IMR-90 (cell line): ENCODE measurements at regions of chr16 and their contacts with region 1.

Region 1: DNA sequence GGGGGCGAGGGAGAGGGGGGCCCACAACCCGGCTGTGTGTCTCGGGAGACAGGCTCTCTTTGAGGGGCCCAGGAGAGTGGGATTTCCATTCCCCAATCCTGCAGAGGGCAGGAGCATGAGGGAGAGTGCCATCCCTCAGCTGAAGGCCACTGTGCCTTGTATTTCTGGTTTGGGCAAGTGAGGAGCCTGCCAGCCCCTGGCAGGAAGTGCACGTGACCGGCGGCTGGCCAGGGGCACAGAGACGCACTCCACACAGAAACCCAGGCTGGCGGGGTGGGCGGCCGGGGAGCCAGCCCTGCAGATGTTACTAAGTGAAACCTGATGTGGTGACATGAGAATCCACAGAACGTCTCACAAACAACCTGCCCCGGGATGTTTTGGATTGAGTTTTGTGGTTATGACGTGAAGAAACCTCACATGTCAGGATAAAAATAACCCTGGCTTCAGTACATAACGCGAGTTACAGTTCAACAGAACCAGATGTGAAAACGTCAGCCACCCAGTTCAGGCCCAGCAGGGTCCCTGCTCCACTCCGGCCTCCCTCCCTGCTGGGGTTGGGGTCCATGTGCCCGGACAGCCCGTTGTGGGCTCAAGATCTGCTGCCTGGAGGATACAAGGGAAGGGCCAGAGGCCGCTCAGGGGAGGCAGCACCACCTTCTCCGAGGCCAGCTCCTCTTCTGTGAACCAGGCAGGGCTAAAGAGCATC is 51.7 kb upstream of the MTSS2 start:
- DNase-seq: peak; percentile 99
- ATAC-seq: peak; percentile 28
- H3K4me3 ChIP-seq: no peak overlapping the region
- H3K27ac ChIP-seq: peak overlapping the region; percentile 95
- H3K4me1 ChIP-seq: peaks cover 58% of the 10 kb centered on the region
- H3K27me3 ChIP-seq: no peaks in the 10 kb centered on the region
- CTCF ChIP-seq: no peak
- POLR2A ChIP-seq: peak; percentile 86
- RAD21 ChIP-seq: 0 out of 2 replicates have a peak, but pooled peaks have one; percentile 26

Region 2: DNA sequence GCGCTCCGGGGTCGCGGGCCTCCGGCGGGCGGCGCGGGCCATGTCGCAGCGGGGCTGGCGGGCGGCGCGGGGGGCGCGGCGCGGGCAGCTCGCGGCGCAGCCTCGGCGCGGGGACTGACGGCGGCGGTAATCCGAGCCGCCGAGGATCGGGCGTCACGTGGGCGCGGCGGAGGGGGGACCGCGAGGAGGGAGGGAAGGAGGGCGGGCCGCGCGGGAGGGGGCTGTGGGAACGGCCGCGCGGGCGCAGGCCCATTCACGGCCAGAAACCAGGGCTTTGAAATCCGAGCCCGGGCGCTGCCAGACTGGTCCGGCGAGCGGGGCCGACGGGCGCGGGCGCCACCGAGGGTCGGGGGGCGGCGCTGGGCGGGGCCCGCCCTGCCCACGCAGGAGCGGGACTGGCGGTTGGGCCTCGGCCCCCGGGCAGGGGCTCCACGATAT is 51.6 kb before region 1 on chr16 and contains the start of gene MTSS2:
- CTCF ChIA-PET with region 1: interaction called, 6 read pairs
- POLR2A ChIA-PET with region 1: interaction called, 7 read pairs
- dilution Hi-C with region 1: no loop called
- in situ Hi-C with region 1: loop called (anchors 5 kb)
- intact Hi-C with region 1: loop called (anchors 1 kb)
- DNase-seq: peak; percentile 85
- ATAC-seq: peak; percentile 70
- H3K4me3 ChIP-seq: peak within 1 kb of the TSS; percentile 90
- H3K27ac ChIP-seq: peak within 1 kb of the TSS; percentile 92
- H3K4me1 ChIP-seq: peaks cover 61% of the 10 kb centered on the region
- H3K27me3 ChIP-seq: no peaks in the 10 kb centered on the region
- CTCF ChIP-seq: 0 out of 2 replicates have a peak, but pooled peaks have one; percentile 2
- POLR2A ChIP-seq: no peak
- RAD21 ChIP-seq: no peak
- total RNA-seq, gene MTSS2: 8.9 and 9.1 TPM in 2 replicates

Region 3: DNA sequence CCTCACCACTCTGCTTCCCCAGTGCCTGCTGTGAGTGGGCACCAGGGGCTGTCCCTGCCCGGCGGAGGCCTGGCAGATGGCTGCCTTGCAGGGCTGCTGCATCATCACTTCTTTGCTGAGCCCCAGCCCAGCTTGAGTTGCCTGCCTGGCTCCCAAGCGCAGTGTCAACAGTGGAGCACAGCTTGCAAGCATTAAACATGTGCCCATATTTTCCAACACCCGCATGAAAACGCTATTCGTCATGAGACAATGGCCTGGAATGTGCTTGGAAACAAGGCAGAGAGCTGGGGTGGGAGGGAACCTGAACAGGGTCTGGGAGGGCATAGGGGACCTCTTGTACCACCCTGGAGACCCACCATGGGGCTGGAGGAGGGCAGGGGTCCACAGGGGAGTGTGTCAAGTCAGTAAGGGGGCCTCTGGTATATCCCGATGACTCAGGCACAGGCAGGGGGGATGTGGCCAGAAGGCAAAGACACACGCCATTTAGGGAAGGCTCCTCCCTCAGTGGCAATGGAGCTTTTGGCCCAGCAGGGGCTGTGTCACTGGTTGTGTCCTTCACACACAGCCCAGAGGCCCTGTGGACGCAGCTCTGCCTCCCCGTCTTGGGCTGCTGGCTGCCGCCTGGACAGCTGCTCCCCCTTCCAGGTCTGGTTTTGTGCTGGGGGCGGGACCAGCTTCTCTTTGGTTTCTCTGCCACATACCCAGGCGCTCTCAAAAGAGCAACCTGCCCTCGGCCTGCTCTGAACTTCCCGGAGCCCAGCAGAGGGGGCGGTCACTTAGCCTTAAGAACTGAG is 34.3 kb before region 1 on chr16:
- CTCF ChIA-PET with region 1: interaction called, 12 read pairs
- POLR2A ChIA-PET with region 1: interaction called, 3 read pairs
- dilution Hi-C with region 1: no loop called
- in situ Hi-C with region 1: no loop called
- intact Hi-C with region 1: loop called (anchors 1 kb)
- DNase-seq: peak; percentile 94
- ATAC-seq: peak; percentile 73
- H3K4me3 ChIP-seq: no peak overlapping the region
- H3K27ac ChIP-seq: peak overlapping the region; percentile 80
- H3K4me1 ChIP-seq: peaks cover 65% of the 10 kb centered on the region
- H3K27me3 ChIP-seq: no peaks in the 10 kb centered on the region
- CTCF ChIP-seq: peak; percentile 55
- POLR2A ChIP-seq: peak; percentile 50; the same call in 1 of the 2 replicates
- RAD21 ChIP-seq: peak; percentile 70

Region 4: DNA sequence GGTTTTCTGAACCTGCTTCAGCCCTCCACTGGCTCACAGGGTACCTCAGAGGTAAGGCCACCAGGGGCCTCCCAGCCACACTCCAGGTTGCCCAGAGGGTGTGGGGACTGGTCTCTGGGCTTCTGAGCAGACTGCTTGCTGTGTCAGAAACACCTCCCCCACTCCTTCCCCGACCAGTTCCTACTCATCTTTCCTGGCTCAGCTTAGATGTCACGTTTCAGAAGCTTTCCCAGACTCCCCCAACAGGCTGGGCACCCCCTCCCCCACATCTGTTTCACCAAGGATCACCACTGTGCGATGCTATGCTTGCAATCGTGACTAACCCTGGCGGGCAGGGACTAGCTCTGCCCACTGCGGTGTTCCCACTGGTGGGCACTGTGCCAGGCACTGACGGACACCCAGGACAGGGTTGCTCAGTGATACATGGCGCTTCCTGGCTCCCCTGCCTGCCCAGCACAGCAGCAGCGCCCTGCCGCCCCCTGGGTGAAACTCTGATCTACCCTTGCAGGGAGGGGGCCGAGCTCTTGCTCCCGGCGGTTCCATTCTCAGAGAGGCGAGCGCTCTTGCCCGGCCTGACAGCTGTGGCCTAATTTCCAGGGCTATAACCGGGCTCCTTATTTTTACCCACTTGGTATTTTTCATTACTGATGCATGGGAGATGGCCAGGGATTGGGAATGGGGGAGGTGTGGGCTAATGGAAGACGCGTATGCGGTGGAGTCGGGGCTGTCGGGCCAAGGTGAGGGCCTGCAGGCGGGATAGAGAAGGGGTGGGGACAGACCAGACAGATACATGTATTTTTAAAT is 22.3 kb before region 1 on chr16:
- CTCF ChIA-PET with region 1: interaction called, 5 read pairs
- POLR2A ChIA-PET with region 1: interaction called, 6 read pairs
- dilution Hi-C with region 1: no loop called
- in situ Hi-C with region 1: no loop called
- intact Hi-C with region 1: loop called (anchors 1 kb)
- DNase-seq: peak; percentile 98
- ATAC-seq: peak; percentile 93
- H3K4me3 ChIP-seq: no peak overlapping the region
- H3K27ac ChIP-seq: peak overlapping the region; percentile 89
- H3K4me1 ChIP-seq: peaks cover 38% of the 10 kb centered on the region
- H3K27me3 ChIP-seq: no peaks in the 10 kb centered on the region
- CTCF ChIP-seq: peak; percentile 28; the same call in 1 of the 2 replicates
- POLR2A ChIP-seq: peak; percentile 71
- RAD21 ChIP-seq: peak; percentile 40

Region 5: DNA sequence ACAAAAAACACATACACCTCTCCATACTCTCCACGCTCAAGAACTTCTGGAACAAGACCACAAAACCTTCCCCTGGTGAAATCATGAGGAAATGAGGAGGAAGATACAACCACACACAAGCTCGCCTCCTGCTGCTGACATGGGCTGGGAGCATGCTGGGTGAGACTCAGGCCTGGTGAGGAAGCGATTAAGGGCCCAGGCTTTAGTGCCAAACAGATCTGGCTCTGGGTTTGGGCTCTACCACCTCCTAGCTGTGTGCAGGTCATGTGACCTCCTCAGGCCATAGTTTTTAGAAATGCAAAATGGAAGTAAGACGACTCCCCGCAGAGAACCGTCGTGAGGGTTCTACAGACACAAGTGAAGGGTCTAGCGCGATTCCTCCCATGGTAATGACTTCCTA is 22.1 kb after region 1 on chr16:
- CTCF ChIA-PET with region 1: interaction called, 10 read pairs
- POLR2A ChIA-PET with region 1: interaction called, 3 read pairs
- dilution Hi-C with region 1: no loop called
- in situ Hi-C with region 1: no loop called
- intact Hi-C with region 1: no loop called
- DNase-seq: no peak
- ATAC-seq: no peak
- H3K4me3 ChIP-seq: no peak overlapping the region
- H3K27ac ChIP-seq: peak overlapping the region; percentile 90
- H3K4me1 ChIP-seq: peaks cover 20% of the 10 kb centered on the region
- H3K27me3 ChIP-seq: no peaks in the 10 kb centered on the region
- CTCF ChIP-seq: no peak
- POLR2A ChIP-seq: no peak
- RAD21 ChIP-seq: no peak